ENCODE measurements at regions of chr12 and their contacts with region 1.

Region 1: DNA sequence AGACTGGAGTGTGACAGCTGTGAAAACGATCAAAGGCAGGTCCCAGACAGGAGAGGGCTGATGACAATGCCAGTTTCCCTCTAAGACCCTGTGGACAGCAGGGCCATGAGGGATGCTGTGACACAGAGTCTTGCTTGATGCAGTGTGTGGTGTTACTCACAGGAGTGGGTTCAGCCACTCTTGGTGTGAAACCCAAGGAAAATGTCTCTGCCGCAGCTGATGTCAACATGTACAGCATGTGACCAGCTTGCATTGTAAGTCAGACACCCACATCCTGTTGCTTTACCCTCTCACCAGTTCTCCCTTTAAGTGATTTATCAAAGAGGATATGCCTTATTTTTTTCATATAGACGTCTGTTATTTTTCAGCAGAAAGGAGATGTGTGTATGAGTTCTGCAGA is 268.6 kb downstream of the BTG1 start:
- DNase-seq: peak; percentile 87 to 98 (median 93)
- H3K4me3 ChIP-seq: peak overlapping the region; percentile 9 to 14
- H3K4me3 Mint-ChIP-seq: peak overlapping the region; percentile 73 to 86 (median 79)
- H3K27ac ChIP-seq: peak overlapping the region; percentile 93
- H3K27ac Mint-ChIP-seq: peak overlapping the region; percentile 99 to 100 (median 100)
- H3K4me1 ChIP-seq: peaks cover 76% of the 10 kb centered on the region
- H3K4me1 Mint-ChIP-seq: peaks cover 54 to 79% (median 64%) of the 10 kb centered on the region in 4 donors
- H3K27me3 ChIP-seq: no peaks in the 10 kb centered on the region
- H3K27me3 Mint-ChIP-seq: no peaks in the 10 kb centered on the region

Region 2: GRCh38 chr12:91577586-91578539 is 299.2 kb before region 1 on chr12:
- CTCF ChIA-PET with region 1: no interaction called
- POLR2A ChIA-PET with region 1: no interaction called
- intact Hi-C with region 1: loop called (anchors 2 kb)
- DNase-seq: peak in 4 of 5 donors; percentile 33 to 44 (median 42)
- H3K4me3 ChIP-seq: peak overlapping the region; percentile 18 to 50
- H3K4me3 Mint-ChIP-seq: peak overlapping the region; percentile 77 to 91 (median 84)
- H3K27ac ChIP-seq: no peak overlapping the region
- H3K27ac Mint-ChIP-seq: peak overlapping the region in 5 of 7 donors; percentile 33 to 91 (median 77)
- H3K4me1 ChIP-seq: peaks cover 4% of the 10 kb centered on the region
- H3K4me1 Mint-ChIP-seq: peaks cover 4 to 9% (median 5%) of the 10 kb centered on the region in 4 donors
- H3K27me3 ChIP-seq: no peaks in the 10 kb centered on the region
- H3K27me3 Mint-ChIP-seq: peaks cover 1 to 3% of the 10 kb centered on the region in 2 donors

Region 3: GRCh38 chr12:91866566-91866965 is 10.5 kb before region 1 on chr12:
- CTCF ChIA-PET with region 1: interaction called, 6 read pairs
- POLR2A ChIA-PET with region 1: interaction called, 10 read pairs
- intact Hi-C with region 1: no loop called
- DNase-seq: no peak
- H3K4me3 ChIP-seq: no peak overlapping the region
- H3K4me3 Mint-ChIP-seq: no peak overlapping the region
- H3K27ac ChIP-seq: no peak overlapping the region
- H3K27ac Mint-ChIP-seq: peak overlapping the region in 1 of 7 donors; percentile 30
- H3K4me1 ChIP-seq: peaks cover 21% of the 10 kb centered on the region
- H3K4me1 Mint-ChIP-seq: peaks cover 19 to 47% (median 33%) of the 10 kb centered on the region in 4 donors
- H3K27me3 ChIP-seq: no peaks in the 10 kb centered on the region
- H3K27me3 Mint-ChIP-seq: no peaks in the 10 kb centered on the region

Region 4: GRCh38 chr12:91978143-91978542 is 101.1 kb after region 1 on chr12:
- CTCF ChIA-PET with region 1: no interaction called
- POLR2A ChIA-PET with region 1: interaction called, 24 read pairs
- intact Hi-C with region 1: loop called (anchors 1 kb)
- DNase-seq: peak; percentile 77 to 93 (median 81)
- H3K4me3 ChIP-seq: no peak overlapping the region
- H3K4me3 Mint-ChIP-seq: peak overlapping the region; percentile 8 to 85 (median 50)
- H3K27ac ChIP-seq: peak overlapping the region; percentile 40
- H3K27ac Mint-ChIP-seq: peak overlapping the region; percentile 70 to 95 (median 87)
- H3K4me1 ChIP-seq: peaks cover 26% of the 10 kb centered on the region
- H3K4me1 Mint-ChIP-seq: peaks cover 23 to 29% (median 27%) of the 10 kb centered on the region in 4 donors
- H3K27me3 ChIP-seq: no peaks in the 10 kb centered on the region
- H3K27me3 Mint-ChIP-seq: no peaks in the 10 kb centered on the region

Region 5: DNA sequence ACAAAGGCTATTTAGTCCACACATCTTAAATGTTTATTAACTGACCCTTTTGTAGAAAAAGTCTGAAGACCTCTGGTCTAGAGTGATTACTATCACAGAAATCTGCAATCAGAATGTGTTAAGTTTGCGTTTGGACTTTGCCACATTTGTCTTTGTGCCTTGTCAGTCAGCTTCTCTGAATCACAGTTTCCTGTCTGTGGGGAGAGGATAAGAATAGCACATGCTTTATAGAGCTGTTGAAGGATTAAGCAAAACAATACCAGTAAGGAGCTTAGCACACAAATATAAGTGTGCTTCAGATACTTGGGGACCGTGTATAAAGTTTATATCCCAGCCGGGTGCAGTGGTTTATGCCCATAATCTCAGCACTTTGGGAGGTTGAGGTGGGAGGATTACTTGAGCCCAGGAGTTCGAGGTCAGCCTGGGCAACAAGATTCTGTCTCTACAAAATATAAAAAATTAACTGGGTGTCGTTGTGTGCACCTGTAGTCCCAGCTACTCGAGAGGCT is 331.6 kb after region 1 on chr12:
- CTCF ChIA-PET with region 1: no interaction called
- POLR2A ChIA-PET with region 1: interaction called, 9 read pairs
- intact Hi-C with region 1: loop called (anchors 2 kb)
- DNase-seq: peak; percentile 61 to 78 (median 66)
- H3K4me3 ChIP-seq: peak overlapping the region in 1 of 2 donors; percentile 30
- H3K4me3 Mint-ChIP-seq: peak overlapping the region; percentile 63 to 88 (median 81)
- H3K27ac ChIP-seq: peak overlapping the region; percentile 19
- H3K27ac Mint-ChIP-seq: peak overlapping the region; percentile 77 to 95 (median 86)
- H3K4me1 ChIP-seq: peaks cover 31% of the 10 kb centered on the region
- H3K4me1 Mint-ChIP-seq: peaks cover 26 to 42% (median 35%) of the 10 kb centered on the region in 4 donors
- H3K27me3 ChIP-seq: no peaks in the 10 kb centered on the region
- H3K27me3 Mint-ChIP-seq: no peaks in the 10 kb centered on the region

Region 6: DNA sequence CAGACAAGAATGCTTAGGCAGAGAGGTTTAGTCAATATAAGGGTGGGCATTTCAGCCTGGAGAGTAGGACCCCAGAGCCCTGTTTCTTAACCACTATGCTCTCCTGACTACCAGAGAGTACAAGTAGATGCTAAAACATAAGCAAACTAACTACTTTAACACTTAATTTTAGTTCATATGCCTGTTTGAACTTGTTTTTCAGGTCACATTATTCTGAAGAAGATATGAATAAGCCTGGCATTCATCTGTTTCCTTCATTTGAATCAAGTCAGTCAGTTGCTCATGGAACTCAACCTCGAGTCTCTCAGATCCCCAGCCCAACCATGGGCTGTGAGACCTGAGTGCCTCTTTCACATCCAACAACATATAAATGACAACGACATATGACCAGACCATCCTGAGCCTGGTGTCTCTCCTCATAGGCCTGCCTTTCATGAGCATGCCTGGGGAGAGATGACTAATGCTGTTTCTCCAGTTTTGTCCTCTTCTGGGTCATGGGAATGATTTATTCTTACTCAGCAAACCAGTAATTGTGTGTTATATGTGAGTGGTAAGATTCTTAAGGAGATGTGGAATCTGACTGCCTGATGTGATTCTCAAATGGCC is 519.7 kb after region 1 on chr12:
- CTCF ChIA-PET with region 1: no interaction called
- POLR2A ChIA-PET with region 1: interaction called, 4 read pairs
- intact Hi-C with region 1: loop called (anchors 2 kb)
- DNase-seq: no peak
- H3K4me3 ChIP-seq: no peak overlapping the region
- H3K4me3 Mint-ChIP-seq: peak overlapping the region in 6 of 8 donors; percentile 19 to 81 (median 57)
- H3K27ac ChIP-seq: peak overlapping the region; percentile 72
- H3K27ac Mint-ChIP-seq: peak overlapping the region; percentile 93 to 98 (median 97)
- H3K4me1 ChIP-seq: peaks cover 93% of the 10 kb centered on the region
- H3K4me1 Mint-ChIP-seq: peaks cover 74 to 100% (median 89%) of the 10 kb centered on the region in 4 donors
- H3K27me3 ChIP-seq: no peaks in the 10 kb centered on the region
- H3K27me3 Mint-ChIP-seq: no peaks in the 10 kb centered on the region